Mammary epithelial cell (primary cell): ENCODE measurements at regions of chr1 and their contacts with region 1.

Region 1: DNA sequence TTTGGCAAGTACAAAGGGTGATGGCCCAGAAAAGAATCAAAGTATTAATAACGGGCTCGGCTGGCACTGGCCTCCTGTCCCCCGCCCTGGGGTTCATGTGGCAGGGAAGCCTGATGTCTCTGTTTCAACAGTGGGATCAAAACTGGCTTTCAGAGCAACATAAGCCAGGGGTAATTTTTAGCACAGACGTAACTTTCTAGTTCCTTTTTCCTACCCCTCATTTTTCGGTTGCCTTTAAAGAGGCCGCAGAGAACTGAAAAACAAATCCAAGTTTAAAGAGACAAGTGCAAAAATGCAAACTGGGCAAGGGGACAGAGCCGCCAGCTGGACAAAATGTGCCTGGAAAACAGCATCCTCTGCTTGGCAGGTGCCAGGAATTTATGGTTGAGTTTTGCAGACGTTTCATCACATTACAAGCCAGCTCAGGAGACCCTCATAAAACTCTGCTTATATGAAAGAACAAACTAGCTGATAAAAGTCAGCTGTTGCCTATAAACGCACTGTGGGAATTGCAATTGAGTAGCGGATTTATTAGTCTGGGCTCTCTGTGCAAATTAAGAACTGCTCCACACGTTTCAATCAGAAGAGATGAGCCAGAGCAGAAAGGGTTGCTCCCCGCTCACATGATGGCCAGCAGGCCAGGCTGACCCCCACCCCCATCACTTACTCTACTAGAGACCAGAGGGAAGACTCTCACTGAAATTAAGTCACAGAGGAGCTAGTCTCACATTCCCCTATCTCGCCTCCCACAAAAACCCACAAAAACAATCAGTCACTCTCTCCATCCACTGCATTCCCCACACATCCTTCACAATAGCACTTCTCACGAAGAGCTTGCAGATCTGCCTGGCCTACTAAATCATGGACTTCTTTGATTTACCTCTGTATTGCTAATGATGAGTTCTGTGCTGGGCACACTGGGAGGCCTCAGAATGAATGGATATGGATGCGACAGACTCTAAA is 15.8 kb upstream of the CDCA8 start:
- DNase-seq: no peak
- H3K4me3 ChIP-seq: no peak overlapping the region
- H3K27ac ChIP-seq: no peak overlapping the region
- H3K4me1 ChIP-seq: no peaks in the 10 kb centered on the region
- H3K27me3 ChIP-seq: peaks cover 2% of the 10 kb centered on the region
- CTCF ChIP-seq: no peak

Region 2: GRCh38 chr1:36553591-36554322 is 1122.8 kb before region 1 on chr1:
- CTCF ChIA-PET with region 1: no interaction called
- dilution Hi-C with region 1: no loop called
- in situ Hi-C with region 1: loop called in 1 of 2 experiments (anchors 25 kb)
- intact Hi-C with region 1: loop called (anchors 10 kb)
- DNase-seq: peak; percentile 41
- H3K4me3 ChIP-seq: no peak overlapping the region
- H3K27ac ChIP-seq: no peak overlapping the region
- H3K4me1 ChIP-seq: no peaks in the 10 kb centered on the region
- H3K27me3 ChIP-seq: no peaks in the 10 kb centered on the region
- CTCF ChIP-seq: peak; percentile 65 to 79

Region 3: DNA sequence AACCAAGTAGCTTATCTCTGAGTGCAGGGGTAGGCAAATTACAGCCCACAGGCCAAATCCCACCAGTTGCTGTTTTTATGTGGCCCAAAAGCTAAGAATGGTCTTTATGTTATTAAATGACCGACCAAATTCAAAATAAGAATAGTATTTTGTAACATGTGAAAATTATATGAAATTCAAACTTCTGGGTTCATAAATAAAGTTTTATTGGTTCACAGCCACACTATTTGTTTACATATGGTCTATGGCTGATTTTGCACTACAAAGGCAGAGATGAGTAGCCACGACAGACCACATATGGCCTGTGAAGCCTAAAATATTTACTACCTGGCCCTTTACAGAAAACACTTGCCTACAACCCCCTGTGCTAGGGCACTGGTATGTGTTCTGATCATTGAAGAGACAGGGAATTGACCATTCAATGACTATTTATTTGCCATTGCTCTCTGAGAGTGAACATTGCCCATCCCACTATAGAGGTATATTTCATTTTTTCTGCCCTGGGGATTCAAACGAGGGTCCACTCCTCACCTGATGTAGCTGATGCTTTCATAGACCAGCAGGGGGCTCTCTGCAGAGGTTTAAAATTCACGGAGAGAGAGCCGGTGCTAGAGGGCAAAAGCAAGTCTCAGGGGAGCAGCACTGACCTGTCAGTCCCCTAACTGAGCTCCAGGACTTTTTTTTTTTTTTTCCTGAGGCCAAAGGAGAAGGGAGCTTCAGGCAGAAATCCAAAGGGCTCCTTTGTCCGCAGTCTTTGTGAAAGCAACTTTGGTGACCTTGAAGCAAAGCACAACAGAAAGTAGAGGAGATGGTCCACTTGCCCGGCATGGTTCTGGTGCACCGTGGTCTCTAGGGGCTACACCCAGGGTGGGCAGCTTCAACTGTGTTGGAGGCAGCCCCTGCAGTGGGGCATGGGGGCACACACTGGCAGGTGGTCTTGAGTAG is 73.5 kb before region 1 on chr1:
- CTCF ChIA-PET with region 1: no interaction called
- dilution Hi-C with region 1: no loop called
- in situ Hi-C with region 1: loop called (anchors 5 to 10 kb)
- intact Hi-C with region 1: no loop called
- DNase-seq: no peak
- H3K4me3 ChIP-seq: no peak overlapping the region
- H3K27ac ChIP-seq: no peak overlapping the region
- H3K4me1 ChIP-seq: no peaks in the 10 kb centered on the region
- H3K27me3 ChIP-seq: peaks cover 3% of the 10 kb centered on the region
- CTCF ChIP-seq: peak; percentile 61 to 74

Region 4: DNA sequence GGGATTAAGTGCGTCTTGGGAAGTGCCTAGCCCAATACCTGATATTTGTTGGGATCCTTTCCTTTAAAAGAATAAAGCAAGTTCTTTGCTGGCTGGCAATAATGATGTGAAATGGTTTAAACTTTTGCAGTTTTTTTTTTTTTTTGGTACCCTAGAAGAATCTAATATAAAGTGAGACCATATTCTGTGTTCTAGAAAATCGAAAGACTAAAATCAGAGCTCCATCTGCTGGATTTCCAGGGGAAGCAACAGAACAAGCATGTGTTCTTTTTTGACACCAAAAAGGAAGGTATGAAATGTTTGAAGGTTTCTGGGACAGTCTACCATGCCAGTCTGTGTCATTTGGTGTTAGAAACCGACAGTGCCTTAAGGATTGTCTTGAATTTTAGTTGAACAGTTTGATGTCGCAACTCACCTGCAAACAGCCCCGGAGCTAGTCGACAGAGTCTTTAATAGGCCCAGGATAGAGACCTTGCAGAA is 342.3 kb after region 1 on chr1:
- CTCF ChIA-PET with region 1: interaction called, 10 read pairs
- dilution Hi-C with region 1: no loop called
- in situ Hi-C with region 1: no loop called
- intact Hi-C with region 1: no loop called
- DNase-seq: no peak
- H3K4me3 ChIP-seq: no peak overlapping the region
- H3K27ac ChIP-seq: no peak overlapping the region
- H3K4me1 ChIP-seq: peaks cover 6% of the 10 kb centered on the region
- H3K27me3 ChIP-seq: no peaks in the 10 kb centered on the region
- CTCF ChIP-seq: peak; percentile 61 to 65